ENCODE measurements at regions of chr3 and their contacts with region 1.

Region 1: DNA sequence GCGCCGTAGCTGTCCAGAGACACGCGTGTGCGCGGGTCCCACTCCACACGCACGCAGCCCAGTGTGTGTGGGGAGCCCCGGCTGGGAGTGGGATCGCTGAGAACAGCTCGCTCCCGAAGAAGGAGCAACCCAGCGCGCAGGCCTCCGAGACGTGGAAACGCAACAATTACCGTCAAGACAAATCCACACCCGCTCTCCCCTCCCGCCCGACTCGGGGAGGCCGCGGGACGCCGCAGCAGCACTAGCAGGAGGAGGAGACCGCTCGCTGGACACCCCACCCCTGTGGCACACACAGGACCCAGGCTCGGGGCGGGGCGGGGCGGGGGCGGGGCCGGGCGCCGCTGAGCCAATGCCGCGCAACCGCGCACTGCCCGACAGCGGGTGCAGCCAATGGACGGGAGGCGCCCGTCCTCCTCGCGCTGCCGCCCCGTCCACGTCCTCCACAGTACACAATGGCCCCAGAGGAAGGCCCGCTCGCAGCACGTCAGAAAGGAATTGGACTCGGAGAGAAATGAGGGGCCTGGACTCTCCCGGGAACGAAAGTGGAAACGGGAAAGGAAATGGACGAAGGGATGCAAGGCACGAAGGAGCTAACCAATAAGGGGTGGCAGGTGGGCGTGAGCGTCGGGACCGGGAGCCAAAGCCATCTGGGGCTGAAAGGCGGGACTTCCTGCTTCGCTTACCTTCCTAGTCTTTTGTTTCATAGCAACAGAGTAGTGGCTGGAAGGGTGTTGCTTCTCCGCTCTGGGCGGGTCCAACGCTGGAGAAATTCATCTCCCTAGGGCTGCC is at the start of gene CBLB:
- DNase-seq: peak; percentile 88 to 90
- H3K4me3 ChIP-seq: peak within 1 kb of the TSS; percentile 99
- H3K4me3 Mint-ChIP-seq: peak within 1 kb of the TSS; percentile 89
- H3K27ac Mint-ChIP-seq: peak within 1 kb of the TSS; percentile 94
- H3K4me1 ChIP-seq: peaks cover 18% of the 10 kb centered on the region
- H3K4me1 Mint-ChIP-seq: no peaks in the 10 kb centered on the region
- H3K27me3 ChIP-seq: no peaks in the 10 kb centered on the region
- H3K27me3 Mint-ChIP-seq: no peaks in the 10 kb centered on the region
- CTCF ChIP-seq: no peak
- total RNA-seq, gene CBLB: 29.6 and 34.3 TPM in 2 replicates

Region 2: GRCh38 chr3:105686278-105686897 is 182.5 kb before region 1 on chr3:
- CTCF ChIA-PET with region 1: no interaction called
- POLR2A ChIA-PET with region 1: no interaction called
- intact Hi-C with region 1: loop called (anchors 5 kb)
- DNase-seq: no peak
- H3K4me3 ChIP-seq: no peak overlapping the region
- H3K4me3 Mint-ChIP-seq: no peak overlapping the region
- H3K27ac Mint-ChIP-seq: no peak overlapping the region
- H3K4me1 ChIP-seq: peaks cover 9% of the 10 kb centered on the region; the same call in 1 of the 2 replicates
- H3K4me1 Mint-ChIP-seq: peaks cover 9% of the 10 kb centered on the region
- H3K27me3 ChIP-seq: no peaks in the 10 kb centered on the region
- H3K27me3 Mint-ChIP-seq: no peaks in the 10 kb centered on the region
- CTCF ChIP-seq: peak; percentile 49 to 68

Region 3: DNA sequence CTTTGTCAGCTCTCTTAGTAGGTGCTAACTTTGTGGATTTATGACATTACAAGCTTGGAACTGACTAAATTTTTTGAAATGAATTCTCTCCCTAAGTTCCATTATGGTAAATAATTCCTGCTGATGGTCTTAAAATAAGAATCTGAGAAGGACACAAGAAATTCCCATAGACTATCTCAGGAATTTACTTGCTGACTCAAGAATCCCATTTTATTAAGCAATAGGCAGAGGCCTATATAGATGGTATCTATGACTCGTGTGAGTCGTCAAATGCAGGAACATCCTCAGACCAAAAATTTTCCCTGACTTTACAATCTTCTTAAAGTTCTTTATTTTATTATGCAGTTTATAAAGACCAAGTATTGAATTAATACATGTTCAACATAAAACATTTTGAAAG is 30.6 kb after region 1 on chr3:
- CTCF ChIA-PET with region 1: no interaction called
- POLR2A ChIA-PET with region 1: no interaction called
- intact Hi-C with region 1: loop called (anchors 2 kb)
- DNase-seq: peak in 1 of 2 experiments; percentile 6
- H3K4me3 ChIP-seq: no peak overlapping the region
- H3K4me3 Mint-ChIP-seq: no peak overlapping the region
- H3K27ac Mint-ChIP-seq: peak overlapping the region; percentile 42
- H3K4me1 ChIP-seq: no peaks in the 10 kb centered on the region; the same call in 1 of the 2 replicates
- H3K4me1 Mint-ChIP-seq: peaks cover 11% of the 10 kb centered on the region
- H3K27me3 ChIP-seq: no peaks in the 10 kb centered on the region
- H3K27me3 Mint-ChIP-seq: no peaks in the 10 kb centered on the region
- CTCF ChIP-seq: no peak

Region 4: GRCh38 chr3:106059953-106060517 is 191.1 kb after region 1 on chr3:
- CTCF ChIA-PET with region 1: no interaction called
- POLR2A ChIA-PET with region 1: no interaction called
- intact Hi-C with region 1: loop called (anchors 1 kb)
- DNase-seq: peak; percentile 49 to 51
- H3K4me3 ChIP-seq: no peak overlapping the region
- H3K4me3 Mint-ChIP-seq: no peak overlapping the region
- H3K27ac Mint-ChIP-seq: no peak overlapping the region
- H3K4me1 ChIP-seq: peaks cover 36% of the 10 kb centered on the region
- H3K4me1 Mint-ChIP-seq: peaks cover 16% of the 10 kb centered on the region
- H3K27me3 ChIP-seq: no peaks in the 10 kb centered on the region
- H3K27me3 Mint-ChIP-seq: no peaks in the 10 kb centered on the region
- CTCF ChIP-seq: no peak

Region 5: GRCh38 chr3:106140431-106140830 is 271.5 kb after region 1 on chr3:
- CTCF ChIA-PET with region 1: no interaction called
- POLR2A ChIA-PET with region 1: no interaction called
- intact Hi-C with region 1: loop called (anchors 1 kb)
- DNase-seq: peak in 1 of 2 experiments; percentile 66
- H3K4me3 ChIP-seq: no peak overlapping the region
- H3K4me3 Mint-ChIP-seq: peak overlapping the region; percentile 2
- H3K27ac Mint-ChIP-seq: peak overlapping the region; percentile 18
- H3K4me1 ChIP-seq: peaks cover 21% of the 10 kb centered on the region
- H3K4me1 Mint-ChIP-seq: peaks cover 17% of the 10 kb centered on the region
- H3K27me3 ChIP-seq: no peaks in the 10 kb centered on the region
- H3K27me3 Mint-ChIP-seq: no peaks in the 10 kb centered on the region
- CTCF ChIP-seq: no peak